ENCODE measurements at regions of chr11 and their contacts with region 1.

Region 1: DNA sequence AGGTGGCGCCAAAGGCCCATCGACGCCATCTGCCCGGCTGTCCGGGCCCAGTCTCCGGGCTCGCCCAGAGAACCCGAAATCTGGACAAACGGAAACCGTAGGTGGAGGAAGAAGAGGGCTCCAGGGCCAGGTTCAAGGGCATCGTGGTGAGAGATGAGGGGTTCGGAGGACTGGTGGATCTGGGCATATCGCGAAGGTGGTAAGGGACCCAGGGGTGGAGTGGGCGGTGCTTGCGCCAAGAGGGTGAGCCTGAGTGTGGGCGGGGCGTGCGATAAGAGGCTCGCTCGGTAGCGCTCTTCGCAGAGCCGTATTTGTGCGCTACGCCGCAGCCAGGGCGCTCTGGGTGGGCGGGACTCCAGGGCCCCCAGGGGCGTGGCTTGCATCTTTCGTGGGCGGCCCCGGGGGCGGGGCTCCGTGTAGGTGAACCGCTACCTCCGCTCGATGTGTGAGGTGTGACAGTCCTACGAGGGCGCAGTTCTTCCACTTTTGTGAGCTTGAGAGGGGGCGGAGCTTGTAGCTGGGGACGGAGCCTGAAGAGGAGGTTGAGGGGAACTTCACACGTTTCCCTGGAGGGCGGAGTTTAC is 4.8 kb downstream of the CD248 start:
- DNase-seq: peak; percentile 94

Region 2: DNA sequence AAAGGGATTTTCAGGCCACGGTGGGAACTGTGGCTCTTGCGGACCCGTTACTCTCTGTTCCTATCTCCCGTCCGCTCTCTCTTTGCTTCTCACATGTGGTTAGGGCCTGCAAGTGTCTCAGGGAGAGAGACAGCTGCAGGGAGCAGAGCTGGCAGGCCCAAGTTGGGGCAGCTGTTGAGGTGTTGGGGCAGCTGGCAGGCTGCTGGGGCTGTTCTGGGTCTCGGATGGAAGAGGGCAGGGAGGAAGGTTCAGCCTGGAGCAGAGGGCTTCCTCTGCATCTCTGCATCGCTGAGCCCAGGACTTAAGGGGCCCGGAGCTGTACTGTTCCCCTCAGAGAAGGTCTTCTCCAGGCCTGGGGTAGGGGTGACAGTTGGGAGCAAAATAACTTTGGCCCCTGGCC is 36.7 kb before region 1 on chr11:
- CTCF ChIA-PET with region 1: no interaction called
- POLR2A ChIA-PET with region 1: no interaction called
- DNase-seq: no peak

Region 3: GRCh38 chr11:66299186-66299585 is 12.9 kb before region 1 on chr11:
- CTCF ChIA-PET with region 1: interaction called, 26 read pairs
- POLR2A ChIA-PET with region 1: no interaction called
- DNase-seq: no peak

Region 4: GRCh38 chr11:66328307-66329144 is 16.5 kb after region 1 on chr11:
- CTCF ChIA-PET with region 1: interaction called, 11 read pairs
- POLR2A ChIA-PET with region 1: interaction called, 5 read pairs
- DNase-seq: peak; percentile 86

Region 5: GRCh38 chr11:66344550-66345315 is 32.7 kb after region 1 on chr11 and contains the start of gene BRMS1:
- CTCF ChIA-PET with region 1: interaction called, 4 read pairs
- POLR2A ChIA-PET with region 1: interaction called, 19 read pairs
- DNase-seq: peak; percentile 93